HepG2 (cell line): ENCODE measurements at regions of chr22 and their contacts with region 1.

Region 1: GRCh38 chr22:37199103-37199759 is 11.2 kb upstream of the C1QTNF6 start:
- DNase-seq: peak; percentile 93
- ATAC-seq: peak; percentile 87
- H3K4me3 ChIP-seq: peak overlapping the region; percentile 70 to 80 (median 73); a peak in 5 of 6 replicates
- H3K27ac ChIP-seq: peak overlapping the region; percentile 90
- H3K4me1 ChIP-seq: peaks cover 69% of the 10 kb centered on the region
- H3K27me3 ChIP-seq: no peaks in the 10 kb centered on the region
- CTCF ChIP-seq: peak; percentile 93
- EP300 ChIP-seq: no peak
- POLR2A ChIP-seq: peak; percentile 81 to 96
- RAD21 ChIP-seq: peak; percentile 80

Region 2: DNA sequence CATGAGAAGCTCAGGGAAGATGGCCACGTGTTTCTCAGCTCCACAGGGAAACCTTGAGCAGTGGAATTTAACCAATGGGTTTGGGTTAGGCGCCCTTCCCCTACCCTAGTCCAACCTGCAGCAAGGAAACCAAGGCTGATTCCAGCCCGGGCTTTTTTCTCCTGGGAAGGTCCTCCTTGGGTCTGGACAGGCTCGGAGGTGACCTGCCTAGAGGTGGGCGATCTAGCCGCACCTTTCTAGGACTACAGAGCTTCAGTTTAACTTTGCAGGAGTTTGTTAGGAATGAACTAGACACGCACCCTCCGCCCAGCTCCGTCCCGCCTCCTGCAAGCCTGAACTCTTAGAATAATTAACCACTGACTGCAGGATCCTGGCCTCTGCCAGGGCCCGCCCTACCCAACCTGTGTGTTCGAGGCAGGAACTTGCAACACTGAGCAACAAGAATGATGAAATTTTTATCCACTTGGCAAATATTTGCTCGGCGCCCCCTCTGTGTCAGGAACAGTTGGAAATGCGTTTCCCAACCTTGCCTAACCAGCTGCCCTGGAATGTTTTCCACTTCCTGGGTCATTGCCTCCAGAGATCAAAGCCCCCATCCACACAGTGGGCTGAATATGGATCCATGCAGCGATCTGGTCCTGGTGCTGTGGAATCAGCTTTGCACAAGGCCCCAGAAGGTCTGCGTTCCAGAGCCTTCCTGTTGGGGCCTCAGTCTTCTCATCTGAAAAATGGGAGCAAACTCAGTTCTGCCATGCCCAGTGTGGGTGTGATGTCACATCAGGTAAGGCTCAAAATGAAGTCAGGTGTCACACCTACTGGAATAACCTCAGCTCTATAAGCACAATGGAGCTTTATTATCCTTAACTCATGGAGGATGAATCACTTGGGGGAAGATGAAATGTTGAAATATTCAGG is 166.4 kb before region 1 on chr22:
- CTCF ChIA-PET with region 1: no interaction called
- POLR2A ChIA-PET with region 1: interaction called, 17 read pairs
- in situ Hi-C with region 1: no loop called
- intact Hi-C with region 1: loop called (anchors 5 kb)
- DNase-seq: peak; percentile 100
- ATAC-seq: peak; percentile 92
- H3K4me3 ChIP-seq: peak overlapping the region; percentile 43 to 69 (median 51)
- H3K27ac ChIP-seq: peak overlapping the region; percentile 99
- H3K4me1 ChIP-seq: peaks cover 89% of the 10 kb centered on the region
- H3K27me3 ChIP-seq: no peaks in the 10 kb centered on the region
- CTCF ChIP-seq: no peak
- EP300 ChIP-seq: peak; percentile 87 to 99; a peak in 3 of 4 replicates
- POLR2A ChIP-seq: peak; percentile 87 to 91
- RAD21 ChIP-seq: 0 out of 2 replicates have a peak, but pooled peaks have one; percentile 3

Region 3: DNA sequence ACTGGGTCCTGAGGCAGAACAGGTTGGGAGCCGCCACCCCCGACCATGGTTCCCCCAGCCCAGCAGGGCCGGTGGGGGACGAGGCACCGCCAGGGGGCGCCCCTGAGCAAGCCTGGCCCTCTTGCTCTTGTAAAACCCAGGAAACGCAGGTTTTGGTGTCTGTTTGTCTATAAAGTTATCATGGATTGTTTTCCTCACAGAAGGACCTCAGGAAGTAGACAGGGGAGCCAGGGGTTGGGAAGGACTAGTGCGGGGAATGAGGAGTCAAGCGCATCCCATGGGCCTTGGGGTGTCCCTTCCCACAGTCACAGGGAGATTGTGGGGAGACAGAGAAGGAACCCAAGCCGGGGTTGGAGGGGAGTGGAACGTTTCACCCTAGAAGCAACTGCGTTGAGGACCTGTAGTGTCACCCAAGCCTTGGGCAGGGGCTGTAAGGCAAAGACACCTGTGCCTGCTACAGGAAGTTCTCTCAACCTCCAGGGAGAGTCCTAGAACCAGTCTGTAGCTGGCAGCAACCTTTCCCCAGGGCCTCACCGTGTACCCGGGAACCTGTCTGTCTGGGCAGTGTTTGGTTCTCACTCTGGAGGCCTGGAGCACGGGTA is 121.2 kb before region 1 on chr22:
- CTCF ChIA-PET with region 1: interaction called, 20 read pairs
- POLR2A ChIA-PET with region 1: no interaction called
- in situ Hi-C with region 1: no loop called
- intact Hi-C with region 1: loop called (anchors 1 kb)
- DNase-seq: peak; percentile 29
- ATAC-seq: peak; percentile 70
- H3K4me3 ChIP-seq: no peak overlapping the region
- H3K27ac ChIP-seq: no peak overlapping the region
- H3K4me1 ChIP-seq: peaks cover 22% of the 10 kb centered on the region; the same call in 1 of the 2 replicates
- H3K27me3 ChIP-seq: no peaks in the 10 kb centered on the region; a peak in 1 of 5 replicates
- CTCF ChIP-seq: peak; percentile 87
- EP300 ChIP-seq: no peak
- POLR2A ChIP-seq: no peak
- RAD21 ChIP-seq: peak; percentile 86

Region 4: DNA sequence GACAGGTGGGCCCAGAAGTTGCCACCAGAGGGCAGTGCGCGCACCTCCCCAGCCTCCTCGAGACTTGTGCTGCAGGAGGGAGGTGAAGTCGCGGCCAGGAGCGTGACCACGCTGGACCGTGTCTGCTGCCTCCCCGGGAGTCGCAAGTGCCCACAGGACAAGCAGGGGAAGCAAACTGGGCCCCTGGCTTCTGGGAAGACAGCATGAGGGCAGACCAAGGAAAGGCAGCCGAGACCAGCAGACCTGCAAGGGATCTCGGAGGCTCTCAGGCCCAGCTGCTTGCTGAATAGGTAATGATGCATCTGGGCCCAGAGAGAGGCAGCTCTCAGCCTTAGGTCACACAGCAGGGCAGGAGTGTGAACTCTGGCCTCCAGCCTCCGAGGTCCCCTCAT is 32.6 kb before region 1 on chr22:
- CTCF ChIA-PET with region 1: interaction called, 57 read pairs
- POLR2A ChIA-PET with region 1: interaction called, 4 read pairs
- in situ Hi-C with region 1: loop called (anchors 5 kb)
- intact Hi-C with region 1: loop called (anchors 1 kb)
- DNase-seq: peak; percentile 42
- ATAC-seq: peak; percentile 87
- H3K4me3 ChIP-seq: peak overlapping the region in 1 of 3 experiments; percentile 44; a peak in 1 of 6 replicates
- H3K27ac ChIP-seq: no peak overlapping the region
- H3K4me1 ChIP-seq: peaks cover 42% of the 10 kb centered on the region
- H3K27me3 ChIP-seq: peaks cover 6 to 18% of the 10 kb centered on the region in 2 experiments; a peak in 3 of 5 replicates
- CTCF ChIP-seq: peak; percentile 96
- EP300 ChIP-seq: no peak
- POLR2A ChIP-seq: no peak
- RAD21 ChIP-seq: peak; percentile 81

Region 5: DNA sequence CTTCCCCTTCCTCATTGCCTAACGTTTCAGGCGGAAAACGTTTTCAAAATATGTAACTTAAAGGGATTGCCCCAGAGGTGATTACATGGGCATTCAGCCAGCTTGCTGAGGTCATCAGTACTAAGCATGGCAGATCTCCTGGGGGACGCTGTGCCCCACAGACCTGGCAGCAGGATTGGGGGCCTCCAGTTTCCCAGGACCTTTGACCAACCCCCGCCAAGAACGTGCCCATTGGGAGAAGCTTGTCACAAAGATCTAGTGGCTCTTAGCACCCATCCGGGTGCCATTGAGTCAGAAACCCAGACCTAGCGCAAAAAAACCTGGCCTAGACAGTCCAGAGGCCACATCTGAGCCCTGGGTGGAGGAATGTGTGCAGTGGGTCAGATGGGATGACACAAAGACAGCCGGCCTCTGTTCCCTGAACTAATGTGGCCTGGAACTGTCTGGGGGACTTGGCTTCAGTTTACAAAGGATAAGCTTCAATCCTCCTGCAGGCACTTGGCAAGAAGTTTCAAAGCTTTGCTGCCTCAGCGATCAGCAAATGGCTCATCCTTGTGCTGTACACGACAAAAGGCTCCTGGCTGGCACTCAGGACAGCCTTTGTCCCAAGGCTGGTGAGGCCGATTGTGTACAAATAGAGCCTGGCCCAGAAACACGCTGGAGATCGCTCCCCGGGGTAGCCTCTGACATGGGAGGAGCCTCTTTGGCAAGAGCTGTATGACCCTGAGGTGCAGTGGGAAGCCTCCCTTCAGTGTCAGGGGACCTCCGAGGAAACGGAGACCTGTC is 20.7 kb before region 1 on chr22:
- CTCF ChIA-PET with region 1: no interaction called
- POLR2A ChIA-PET with region 1: interaction called, 22 read pairs
- in situ Hi-C with region 1: no loop called
- intact Hi-C with region 1: loop called (anchors 1 kb)
- DNase-seq: peak; percentile 67
- ATAC-seq: peak; percentile 84
- H3K4me3 ChIP-seq: peak overlapping the region in 2 of 3 experiments; percentile 15 to 53; a peak in 3 of 6 replicates
- H3K27ac ChIP-seq: peak overlapping the region; percentile 31
- H3K4me1 ChIP-seq: peaks cover 36% of the 10 kb centered on the region
- H3K27me3 ChIP-seq: peaks cover 4 to 39% of the 10 kb centered on the region in 2 experiments
- CTCF ChIP-seq: no peak
- EP300 ChIP-seq: no peak
- POLR2A ChIP-seq: peak in 1 of 2 experiments; percentile 35; a peak in 1 of 4 replicates
- RAD21 ChIP-seq: no peak

Region 6: DNA sequence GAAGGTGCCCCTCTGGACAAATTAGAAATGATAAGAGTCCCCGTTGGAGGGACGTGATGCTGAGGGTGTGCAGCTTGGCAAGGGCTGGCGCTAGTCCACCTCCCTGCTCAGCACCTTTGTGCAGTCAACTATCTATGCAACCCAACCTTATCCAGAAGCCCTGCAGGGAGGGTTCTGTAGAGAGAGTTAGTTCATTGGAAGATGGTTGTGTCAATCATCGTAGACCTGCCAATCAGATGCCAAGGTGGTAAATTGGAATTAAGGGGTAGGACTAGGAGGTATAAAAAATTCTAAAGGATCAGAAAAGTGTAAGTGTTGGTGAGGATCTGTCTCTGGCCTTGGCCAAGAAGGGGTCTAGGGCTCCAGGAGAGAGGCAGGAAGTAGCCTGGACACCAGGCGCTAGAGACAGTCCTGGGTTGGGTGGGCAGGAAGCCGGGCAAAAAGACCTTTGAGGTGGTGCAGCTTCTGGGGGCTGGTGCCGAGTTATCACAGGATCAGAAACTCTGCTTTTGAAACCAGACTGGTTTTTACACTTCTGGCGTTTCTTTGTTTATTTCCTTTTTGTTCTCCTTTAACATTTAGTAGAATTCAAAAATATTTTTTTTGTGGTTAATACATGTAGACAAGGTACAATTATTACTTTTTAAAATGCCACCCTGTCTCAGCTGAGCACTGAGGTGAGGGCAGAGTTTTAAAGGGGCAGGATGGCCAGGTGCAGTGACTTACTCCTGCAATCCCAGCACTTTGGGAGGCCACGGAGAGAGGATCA is 12.8 kb before region 1 on chr22:
- CTCF ChIA-PET with region 1: no interaction called
- POLR2A ChIA-PET with region 1: interaction called, 11 read pairs
- in situ Hi-C with region 1: no loop called
- intact Hi-C with region 1: no loop called
- DNase-seq: peak; percentile 64
- ATAC-seq: peak; percentile 44
- H3K4me3 ChIP-seq: no peak overlapping the region
- H3K27ac ChIP-seq: no peak overlapping the region
- H3K4me1 ChIP-seq: peaks cover 22% of the 10 kb centered on the region
- H3K27me3 ChIP-seq: no peaks in the 10 kb centered on the region
- CTCF ChIP-seq: no peak
- EP300 ChIP-seq: no peak
- POLR2A ChIP-seq: no peak
- RAD21 ChIP-seq: no peak

Region 7: DNA sequence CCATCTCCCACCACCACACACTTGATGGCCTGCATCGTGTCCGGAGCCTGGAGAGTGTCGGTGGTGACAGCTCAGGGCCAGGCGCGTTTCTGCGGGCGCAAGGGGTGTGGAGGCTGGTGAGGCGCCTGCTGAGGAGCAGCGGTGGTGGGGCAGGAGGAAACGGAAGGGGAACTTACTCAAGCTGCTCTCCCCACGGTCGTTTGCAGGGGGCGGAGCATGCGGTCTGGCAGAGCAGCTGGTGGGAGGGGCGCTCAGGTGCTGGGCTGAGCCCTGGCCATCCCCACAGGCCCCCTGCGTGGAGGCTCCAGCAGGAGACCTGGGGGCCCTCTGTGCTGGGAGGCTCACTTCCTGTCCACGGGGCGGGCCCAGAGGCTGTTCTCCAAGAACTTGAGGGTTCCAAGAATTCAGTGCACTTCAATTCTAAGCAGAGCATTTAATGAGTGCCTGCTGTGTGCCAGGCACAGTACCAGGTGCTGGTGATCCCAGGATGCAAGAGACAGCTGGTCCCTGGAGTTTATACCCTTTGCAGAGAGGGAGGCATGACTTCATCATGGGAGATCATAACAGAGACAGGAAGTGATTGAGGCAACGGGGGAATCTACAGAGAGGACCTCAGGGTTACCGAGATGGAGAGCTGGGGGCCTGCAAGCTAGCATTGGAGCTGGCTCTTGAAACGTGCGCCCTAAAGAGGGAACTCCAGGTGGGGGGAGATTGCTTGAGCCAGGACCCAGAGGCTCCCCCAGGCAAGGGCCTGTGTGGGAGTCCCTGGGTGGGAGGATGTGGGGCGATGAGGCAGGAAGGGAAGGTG is 45.1 kb after region 1 on chr22 and contains the start of gene RAC2:
- CTCF ChIA-PET with region 1: no interaction called
- POLR2A ChIA-PET with region 1: no interaction called
- in situ Hi-C with region 1: no loop called
- intact Hi-C with region 1: no loop called
- DNase-seq: no peak
- ATAC-seq: no peak
- H3K4me3 ChIP-seq: no peak within 1 kb of the TSS
- H3K27ac ChIP-seq: no peak within 1 kb of the TSS
- H3K4me1 ChIP-seq: 0 out of 2 replicates have a peak, but pooled peaks cover 5% of the 10 kb centered on the region
- H3K27me3 ChIP-seq: peaks cover 0 to 37% of the 10 kb centered on the region in 2 experiments; a peak in 3 of 5 replicates
- CTCF ChIP-seq: no peak
- EP300 ChIP-seq: no peak
- POLR2A ChIP-seq: no peak
- RAD21 ChIP-seq: no peak
- total RNA-seq, gene RAC2: not detected in 2 replicates

Region 8: GRCh38 chr22:37260901-37261336 is 61.7 kb after region 1 on chr22:
- CTCF ChIA-PET with region 1: interaction called, 6 read pairs
- POLR2A ChIA-PET with region 1: no interaction called
- in situ Hi-C with region 1: no loop called
- intact Hi-C with region 1: loop called (anchors 5 kb)
- DNase-seq: peak; percentile 25
- ATAC-seq: peak; percentile 83
- H3K4me3 ChIP-seq: no peak overlapping the region
- H3K27ac ChIP-seq: no peak overlapping the region
- H3K4me1 ChIP-seq: no peaks in the 10 kb centered on the region
- H3K27me3 ChIP-seq: peaks cover 0 to 19% of the 10 kb centered on the region in 2 experiments; a peak in 3 of 5 replicates
- CTCF ChIP-seq: peak; percentile 87
- EP300 ChIP-seq: no peak
- POLR2A ChIP-seq: no peak
- RAD21 ChIP-seq: peak; percentile 15; the same call in 1 of the 2 replicates